CD4-positive, alpha-beta T cell (primary cell): ENCODE measurements at regions of chr17 and their contacts with region 1.

Region 1: GRCh38 chr17:75319904-75320691 is 30.9 kb upstream of the SLC25A19 start:
- DNase-seq: no peak
- ATAC-seq: no peak
- H3K4me3 ChIP-seq: no peak overlapping the region
- H3K4me3 Mint-ChIP-seq: no peak overlapping the region
- H3K27ac ChIP-seq: no peak overlapping the region
- H3K27ac Mint-ChIP-seq: no peak overlapping the region
- H3K4me1 ChIP-seq: peaks cover 11% of the 10 kb centered on the region
- H3K4me1 Mint-ChIP-seq: peaks cover 9% of the 10 kb centered on the region
- H3K27me3 ChIP-seq: no peaks in the 10 kb centered on the region
- H3K27me3 Mint-ChIP-seq: no peaks in the 10 kb centered on the region
- CTCF ChIP-seq: no peak

Region 2: GRCh38 chr17:74945543-74945942 is 374.6 kb before region 1 on chr17:
- CTCF ChIA-PET with region 1: no interaction called
- POLR2A ChIA-PET with region 1: no interaction called
- intact Hi-C with region 1: no loop called
- DNase-seq: no peak
- ATAC-seq: no peak
- H3K4me3 ChIP-seq: no peak overlapping the region
- H3K4me3 Mint-ChIP-seq: no peak overlapping the region
- H3K27ac ChIP-seq: no peak overlapping the region
- H3K27ac Mint-ChIP-seq: no peak overlapping the region
- H3K4me1 ChIP-seq: no peaks in the 10 kb centered on the region
- H3K4me1 Mint-ChIP-seq: no peaks in the 10 kb centered on the region
- H3K27me3 ChIP-seq: peaks cover 0 to 2% of the 10 kb centered on the region in 2 experiments
- H3K27me3 Mint-ChIP-seq: peaks cover 30% of the 10 kb centered on the region
- CTCF ChIP-seq: no peak

Region 3: DNA sequence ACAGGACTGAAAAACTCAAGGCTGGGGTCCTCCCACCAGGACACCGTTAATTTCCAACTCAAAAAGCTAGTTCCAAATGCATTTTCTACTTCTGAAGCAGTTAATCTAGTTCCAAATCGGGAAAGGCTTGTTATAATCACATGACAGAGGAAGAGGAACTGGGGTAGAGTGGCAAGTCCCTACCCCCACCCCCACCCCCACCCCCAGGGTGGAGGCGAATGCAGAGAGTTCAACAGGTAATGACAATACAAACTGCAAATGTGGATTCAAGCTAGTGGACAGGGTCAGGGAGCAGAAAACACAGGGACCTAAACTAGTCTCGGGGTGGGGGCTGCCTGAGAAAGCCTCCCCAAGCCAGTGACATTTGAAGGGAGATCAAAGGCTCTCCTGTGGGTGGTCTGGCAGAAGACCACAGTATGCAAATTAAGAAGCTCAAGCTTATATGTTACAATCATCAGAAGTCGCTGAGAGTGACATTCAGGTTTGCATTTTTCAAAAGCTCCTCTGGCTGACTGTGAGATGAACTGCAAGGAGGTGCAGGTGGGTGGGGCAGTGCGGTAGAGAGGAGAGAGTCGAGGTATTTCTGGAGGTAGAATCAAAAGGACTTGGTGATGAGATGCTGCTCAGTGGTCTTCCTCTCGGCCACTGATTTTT is 25.5 kb after region 1 on chr17:
- CTCF ChIA-PET with region 1: interaction called, 14 read pairs
- POLR2A ChIA-PET with region 1: interaction called, 9 read pairs
- intact Hi-C with region 1: loop called in 1 of 2 experiments (anchors 2 kb)
- DNase-seq: peak in 12 of 14 experiments; percentile 12 to 71 (median 44)
- ATAC-seq: peak; percentile 79
- H3K4me3 ChIP-seq: peak overlapping the region; percentile 15
- H3K4me3 Mint-ChIP-seq: peak overlapping the region; percentile 76
- H3K27ac ChIP-seq: peak overlapping the region in 1 of 2 donors; percentile 12
- H3K27ac Mint-ChIP-seq: peak overlapping the region; percentile 85
- H3K4me1 ChIP-seq: peaks cover 93% of the 10 kb centered on the region
- H3K4me1 Mint-ChIP-seq: peaks cover 95% of the 10 kb centered on the region
- H3K27me3 ChIP-seq: no peaks in the 10 kb centered on the region
- H3K27me3 Mint-ChIP-seq: no peaks in the 10 kb centered on the region
- CTCF ChIP-seq: no peak

Region 4: GRCh38 chr17:75393523-75394331 is 73.6 kb after region 1 on chr17:
- CTCF ChIA-PET with region 1: interaction called, 12 read pairs
- POLR2A ChIA-PET with region 1: interaction called, 14 read pairs
- intact Hi-C with region 1: no loop called
- DNase-seq: peak; percentile 37 to 92 (median 77)
- ATAC-seq: peak; percentile 86
- H3K4me3 ChIP-seq: peak overlapping the region; percentile 68
- H3K4me3 Mint-ChIP-seq: peak overlapping the region; percentile 92
- H3K27ac ChIP-seq: peak overlapping the region; percentile 23 to 63
- H3K27ac Mint-ChIP-seq: peak overlapping the region; percentile 91
- H3K4me1 ChIP-seq: peaks cover 52% of the 10 kb centered on the region
- H3K4me1 Mint-ChIP-seq: peaks cover 88% of the 10 kb centered on the region
- H3K27me3 ChIP-seq: no peaks in the 10 kb centered on the region
- H3K27me3 Mint-ChIP-seq: no peaks in the 10 kb centered on the region
- CTCF ChIP-seq: no peak

Region 5: GRCh38 chr17:75400326-75400939 is 80.3 kb after region 1 on chr17:
- CTCF ChIA-PET with region 1: interaction called, 25 read pairs
- POLR2A ChIA-PET with region 1: interaction called, 28 read pairs
- intact Hi-C with region 1: loop called (anchors 1 kb)
- DNase-seq: no peak
- ATAC-seq: no peak
- H3K4me3 ChIP-seq: no peak overlapping the region
- H3K4me3 Mint-ChIP-seq: peak overlapping the region; percentile 15
- H3K27ac ChIP-seq: no peak overlapping the region
- H3K27ac Mint-ChIP-seq: no peak overlapping the region
- H3K4me1 ChIP-seq: peaks cover 63% of the 10 kb centered on the region
- H3K4me1 Mint-ChIP-seq: peaks cover 68% of the 10 kb centered on the region
- H3K27me3 ChIP-seq: no peaks in the 10 kb centered on the region
- H3K27me3 Mint-ChIP-seq: no peaks in the 10 kb centered on the region
- CTCF ChIP-seq: no peak